ENCODE measurements at regions of chr14 and their contacts with region 1.

Region 1: GRCh38 chr14:50060871-50061663 is 55.3 kb downstream of the VCPKMT start:
- DNase-seq: peak; percentile 59 to 93
- H3K4me3 ChIP-seq: peak overlapping the region in 1 of 2 donors; percentile 28
- H3K27ac ChIP-seq: peak overlapping the region; percentile 80 to 82
- H3K4me1 ChIP-seq: peaks cover 14 to 29% of the 10 kb centered on the region in 2 donors
- H3K27me3 ChIP-seq: no peaks in the 10 kb centered on the region
- CTCF ChIP-seq: peak; percentile 28 to 51 (median 34)

Region 2: DNA sequence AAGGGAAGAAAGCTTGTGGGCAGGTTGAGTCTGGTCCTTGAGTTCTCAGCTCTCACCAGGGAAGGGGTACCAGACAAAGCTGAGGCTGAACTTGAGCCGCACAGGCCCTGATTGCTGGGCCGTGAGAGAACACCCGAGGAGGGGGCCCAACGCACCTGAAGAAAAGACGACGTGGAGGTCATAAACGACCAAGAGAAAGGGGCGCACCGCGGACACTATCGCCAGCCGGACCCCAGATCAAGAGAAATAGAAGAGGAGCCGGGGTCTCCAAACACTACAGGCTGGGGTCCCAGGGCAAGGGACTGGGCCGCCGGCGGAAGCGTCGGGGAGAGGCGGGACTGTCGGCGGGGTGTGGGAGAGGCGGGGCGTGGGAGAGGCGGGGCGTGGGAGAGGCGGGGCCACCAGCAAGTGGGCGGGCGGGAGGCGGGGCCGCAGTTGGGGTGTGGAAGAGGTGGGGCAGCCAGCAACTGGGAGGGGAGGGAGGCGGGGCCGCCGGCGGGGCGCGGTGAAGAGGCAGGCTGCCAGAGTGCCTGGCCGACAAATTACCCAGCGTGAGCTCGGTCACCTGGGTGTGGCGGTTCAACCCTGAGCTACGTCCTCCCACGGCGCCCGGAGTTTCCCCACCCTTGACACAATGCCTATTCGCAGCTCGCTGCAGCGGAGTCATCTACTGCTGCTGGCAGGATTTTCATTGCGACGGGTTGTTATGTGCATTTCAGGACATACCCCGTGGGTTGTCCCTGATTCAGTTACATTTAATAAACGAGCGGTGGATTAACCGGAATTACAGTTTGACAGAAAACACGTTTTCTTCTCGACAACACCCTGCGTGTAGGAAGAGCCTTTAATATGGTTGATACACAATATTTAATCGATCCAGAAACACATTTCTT is 193.0 kb before region 1 on chr14:
- intact Hi-C with region 1: loop called (anchors 1 kb)
- DNase-seq: peak; percentile 89 to 98
- H3K4me3 ChIP-seq: peak overlapping the region; percentile 64 to 66
- H3K27ac ChIP-seq: peak overlapping the region; percentile 89 to 90
- H3K4me1 ChIP-seq: peaks cover 3 to 8% of the 10 kb centered on the region in 2 donors
- H3K27me3 ChIP-seq: no peaks in the 10 kb centered on the region
- CTCF ChIP-seq: no peak

Region 3: GRCh38 chr14:49892636-49893308 is 168.3 kb before region 1 on chr14 and contains the start of gene ARF6:
- intact Hi-C with region 1: loop called (anchors 1 kb)
- DNase-seq: peak; percentile 92 to 99
- H3K4me3 ChIP-seq: peak within 1 kb of the TSS; percentile 85 to 95
- H3K27ac ChIP-seq: peak within 1 kb of the TSS; percentile 100
- H3K4me1 ChIP-seq: peaks cover 0 to 30% of the 10 kb centered on the region in 2 donors
- H3K27me3 ChIP-seq: no peaks in the 10 kb centered on the region
- CTCF ChIP-seq: no peak
- total RNA-seq, gene ARF6: 31.5 TPM

Region 4: DNA sequence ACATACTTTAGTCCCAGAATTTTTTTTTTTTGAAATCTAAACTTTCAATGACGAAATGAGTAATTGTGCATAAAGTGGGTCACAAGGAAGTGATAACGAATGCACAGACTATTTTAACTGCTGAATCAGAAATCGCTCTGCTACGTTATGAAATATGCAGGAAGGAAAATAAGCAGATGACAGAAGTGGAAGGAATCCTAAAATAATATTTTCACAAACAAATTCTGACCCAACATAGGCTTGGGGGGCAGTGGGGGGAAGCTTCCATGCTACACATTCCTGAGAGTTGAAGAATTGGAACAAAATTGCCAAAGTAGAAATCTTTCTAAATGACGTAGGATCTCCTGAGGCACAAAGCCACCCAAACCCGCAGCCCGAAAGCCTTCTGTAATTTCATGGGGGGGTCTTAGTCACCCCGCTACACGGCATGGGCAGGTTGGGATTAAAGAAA is 78.5 kb before region 1 on chr14:
- intact Hi-C with region 1: loop called (anchors 5 kb)
- DNase-seq: peak in 1 of 2 donors; percentile 86
- H3K4me3 ChIP-seq: peak overlapping the region; percentile 36 to 53
- H3K27ac ChIP-seq: peak overlapping the region; percentile 80 to 89
- H3K4me1 ChIP-seq: peaks cover 6 to 25% of the 10 kb centered on the region in 2 donors
- H3K27me3 ChIP-seq: no peaks in the 10 kb centered on the region
- CTCF ChIP-seq: no peak

Region 5: DNA sequence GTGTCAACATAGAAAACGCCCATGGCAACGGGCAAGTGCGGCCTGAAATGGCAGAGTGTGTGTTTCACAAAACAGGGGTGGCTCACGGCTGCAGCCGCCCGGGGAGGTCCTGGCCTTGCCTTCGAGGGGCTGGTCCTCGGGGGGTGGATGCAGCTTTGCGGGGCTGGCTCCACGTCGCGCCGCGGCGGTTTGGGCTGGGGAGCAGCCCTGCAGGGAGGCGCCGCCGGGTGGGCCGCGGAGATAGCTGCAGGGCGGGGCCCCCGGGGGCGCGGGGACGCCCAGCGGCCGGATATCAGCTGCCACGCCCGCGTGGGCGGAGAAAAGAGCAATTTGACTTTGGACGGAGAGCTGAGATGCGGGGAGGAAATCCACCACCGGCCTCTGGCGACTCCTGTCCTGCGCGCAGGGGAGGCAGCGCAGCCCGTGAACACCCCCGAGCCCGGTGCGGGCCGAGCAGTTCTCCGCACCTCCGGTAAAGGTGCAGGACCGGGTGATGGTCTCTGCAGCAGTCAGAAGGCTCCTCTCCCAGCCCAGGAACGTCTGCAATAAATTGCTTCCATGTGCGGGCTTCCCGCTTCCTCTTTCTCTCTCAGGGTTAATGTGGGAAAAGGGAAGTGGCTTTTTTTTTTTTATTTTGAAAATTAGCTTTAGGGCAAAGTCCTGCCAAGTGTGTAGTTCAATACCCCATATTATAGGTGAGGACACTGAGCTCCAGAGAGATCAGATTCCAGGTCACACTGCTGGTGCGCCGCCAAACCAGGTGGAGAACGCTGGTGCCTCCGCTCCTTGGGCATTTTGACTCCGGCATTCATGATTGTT is 57.6 kb before region 1 on chr14:
- intact Hi-C with region 1: loop called (anchors 1 kb)
- DNase-seq: peak; percentile 33 to 90
- H3K4me3 ChIP-seq: peak overlapping the region; percentile 62 to 69
- H3K27ac ChIP-seq: peak overlapping the region; percentile 96 to 97
- H3K4me1 ChIP-seq: peaks cover 14 to 48% of the 10 kb centered on the region in 2 donors
- H3K27me3 ChIP-seq: no peaks in the 10 kb centered on the region
- CTCF ChIP-seq: peak in 1 of 3 experiments; percentile 34

Region 6: DNA sequence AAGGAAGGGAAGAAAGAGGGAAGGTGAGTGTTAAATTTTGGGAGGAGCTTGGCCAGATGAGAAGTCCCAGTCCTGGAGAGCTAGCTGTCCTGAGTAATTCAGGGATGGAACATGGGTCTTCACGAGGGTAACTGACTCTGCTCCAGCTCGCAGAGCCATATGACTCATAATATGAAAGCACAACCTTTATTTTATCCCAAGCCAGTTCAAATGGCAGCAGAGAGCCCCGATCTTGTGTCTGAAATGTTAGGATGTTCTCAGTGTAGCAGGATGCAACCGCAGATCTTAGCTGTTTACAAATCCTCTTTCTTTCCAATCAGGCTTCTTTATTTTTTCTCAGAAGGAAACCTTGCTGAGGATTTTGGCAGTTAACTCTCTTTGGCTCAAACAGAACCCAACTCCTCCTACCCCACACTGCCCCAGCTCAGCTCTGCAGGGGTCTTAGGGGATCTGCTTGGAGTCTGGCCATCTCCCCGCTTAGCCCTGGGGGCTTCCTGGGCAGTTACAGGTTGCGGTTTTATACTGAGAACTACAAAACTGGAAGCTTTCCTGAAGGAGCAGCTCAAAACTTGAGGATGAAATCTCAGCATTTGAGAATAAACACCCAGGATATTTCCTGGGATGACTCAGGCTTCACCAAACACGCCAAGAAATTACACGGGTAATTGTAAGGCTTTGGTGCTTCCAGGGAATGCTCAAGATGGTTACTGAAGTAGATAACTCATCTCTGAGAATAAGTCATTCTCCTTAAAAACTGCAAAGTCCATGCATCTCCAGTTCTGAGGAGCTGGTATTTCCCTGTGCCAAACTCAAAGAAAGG is 37.2 kb before region 1 on chr14:
- intact Hi-C with region 1: loop called (anchors 2 kb)
- DNase-seq: peak in 1 of 2 donors; percentile 74
- H3K4me3 ChIP-seq: peak overlapping the region in 1 of 2 donors; percentile 9
- H3K27ac ChIP-seq: peak overlapping the region; percentile 70 to 78
- H3K4me1 ChIP-seq: peaks cover 7 to 35% of the 10 kb centered on the region in 2 donors
- H3K27me3 ChIP-seq: no peaks in the 10 kb centered on the region
- CTCF ChIP-seq: no peak

Region 7: GRCh38 chr14:50045039-50045711 is 15.9 kb before region 1 on chr14:
- intact Hi-C with region 1: loop called (anchors 1 kb)
- DNase-seq: peak; percentile 76 to 91
- H3K4me3 ChIP-seq: no peak overlapping the region
- H3K27ac ChIP-seq: peak overlapping the region; percentile 85 to 91
- H3K4me1 ChIP-seq: peaks cover 14 to 27% of the 10 kb centered on the region in 2 donors
- H3K27me3 ChIP-seq: no peaks in the 10 kb centered on the region
- CTCF ChIP-seq: no peak

Measured in ascending aorta (tissue), 2 donors.